ENCODE measurements at regions of chr15 and their contacts with region 1.

Region 1: DNA sequence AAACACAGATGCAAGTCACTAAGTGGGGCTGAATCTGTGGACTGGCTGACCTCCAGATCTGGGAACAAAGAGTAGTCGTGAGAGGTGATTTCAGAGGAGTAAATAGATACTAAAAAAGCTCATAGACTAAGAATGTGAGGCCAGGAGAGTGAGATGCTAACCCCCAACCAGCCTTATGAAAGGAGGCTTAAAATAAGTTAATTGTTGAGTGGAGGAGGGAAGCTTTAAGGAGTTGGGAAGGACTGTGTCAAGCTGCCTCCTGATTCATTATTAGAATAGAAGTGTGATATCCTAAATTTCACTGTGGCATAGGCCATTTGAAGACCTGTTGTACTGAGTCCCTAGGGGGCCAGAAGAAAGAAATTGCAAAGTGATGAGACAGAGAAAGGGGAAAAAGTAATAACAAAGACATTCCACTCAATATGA is 107.6 kb downstream of the RBPMS2 start:
- DNase-seq: no peak
- ATAC-seq: no peak
- H3K4me3 ChIP-seq: no peak overlapping the region
- H3K4me3 Mint-ChIP-seq: no peak overlapping the region
- H3K27ac ChIP-seq: no peak overlapping the region
- H3K27ac Mint-ChIP-seq: peak overlapping the region; percentile 9 to 86
- H3K4me1 ChIP-seq: no peaks in the 10 kb centered on the region
- H3K4me1 Mint-ChIP-seq: peaks cover 17 to 26% (median 23%) of the 10 kb centered on the region in 3 donors
- H3K27me3 ChIP-seq: no peaks in the 10 kb centered on the region
- H3K27me3 Mint-ChIP-seq: no peaks in the 10 kb centered on the region

Region 2: GRCh38 chr15:64678126-64678819 is 10.5 kb after region 1 on chr15:
- CTCF ChIA-PET with region 1: no interaction called
- POLR2A ChIA-PET with region 1: interaction called in 1 of 2 experiments, 13 read pairs
- DNase-seq: no peak
- ATAC-seq: no peak
- H3K4me3 ChIP-seq: no peak overlapping the region
- H3K4me3 Mint-ChIP-seq: no peak overlapping the region
- H3K27ac ChIP-seq: no peak overlapping the region
- H3K27ac Mint-ChIP-seq: peak overlapping the region in 1 of 2 donors; percentile 53
- H3K4me1 ChIP-seq: no peaks in the 10 kb centered on the region
- H3K4me1 Mint-ChIP-seq: no peaks in the 10 kb centered on the region
- H3K27me3 ChIP-seq: no peaks in the 10 kb centered on the region
- H3K27me3 Mint-ChIP-seq: no peaks in the 10 kb centered on the region